Endothelial cell of umbilical vein (primary cell): ENCODE measurements at regions of chr15 and their contacts with region 1.

Region 1: DNA sequence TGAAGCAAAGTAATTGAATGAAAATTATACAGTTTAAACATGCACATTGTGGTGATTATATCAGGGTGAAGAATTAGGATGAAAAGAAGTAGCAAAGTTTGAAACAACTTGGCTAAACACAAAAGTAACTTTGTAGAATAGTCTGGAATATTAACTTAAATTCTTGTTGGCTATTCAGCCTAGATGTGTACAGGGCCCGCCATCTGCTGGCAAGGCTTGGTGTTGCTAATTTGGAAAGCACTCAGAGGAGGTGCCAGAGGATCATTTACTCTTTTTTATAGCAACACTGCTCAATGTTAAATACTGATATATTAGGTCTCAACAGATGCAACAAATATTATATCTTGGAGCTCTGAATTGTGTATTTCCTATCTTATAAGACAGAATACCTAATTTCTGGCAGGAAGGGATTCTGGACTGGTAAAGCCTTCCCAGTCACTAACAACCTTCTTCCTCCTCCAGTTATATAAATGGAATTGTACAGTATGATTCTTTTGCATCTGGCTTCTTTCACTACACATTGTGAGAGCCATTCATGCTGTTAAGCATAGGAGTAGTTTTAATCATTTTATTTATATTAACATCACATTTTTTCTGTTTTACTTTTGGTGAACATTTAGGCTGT is 36.1 kb downstream of the TTC23 start:
- DNase-seq: peak; percentile 77
- H3K4me3 ChIP-seq: no peak overlapping the region
- H3K27ac ChIP-seq: no peak overlapping the region
- H3K4me1 ChIP-seq: peaks cover 11% of the 10 kb centered on the region
- H3K27me3 ChIP-seq: no peaks in the 10 kb centered on the region
- CTCF ChIP-seq: peak; percentile 79 to 83
- POLR2A ChIP-seq: no peak

Region 2: GRCh38 chr15:98658831-98659699 is 554.2 kb before region 1 on chr15:
- CTCF ChIA-PET with region 1: no interaction called
- POLR2A ChIA-PET with region 1: no interaction called
- dilution Hi-C with region 1: no loop called
- intact Hi-C with region 1: loop called (anchors 10 kb)
- DNase-seq: peak; percentile 51
- H3K4me3 ChIP-seq: no peak overlapping the region
- H3K27ac ChIP-seq: no peak overlapping the region
- H3K4me1 ChIP-seq: peaks cover 23% of the 10 kb centered on the region
- H3K27me3 ChIP-seq: no peaks in the 10 kb centered on the region
- CTCF ChIP-seq: peak; percentile 75 to 81
- POLR2A ChIP-seq: no peak

Region 3: GRCh38 chr15:99051308-99051707 is 162.0 kb before region 1 on chr15:
- CTCF ChIA-PET with region 1: no interaction called
- POLR2A ChIA-PET with region 1: no interaction called
- dilution Hi-C with region 1: no loop called
- intact Hi-C with region 1: no loop called
- DNase-seq: no peak
- H3K4me3 ChIP-seq: no peak overlapping the region
- H3K27ac ChIP-seq: no peak overlapping the region
- H3K4me1 ChIP-seq: no peaks in the 10 kb centered on the region
- H3K27me3 ChIP-seq: no peaks in the 10 kb centered on the region
- CTCF ChIP-seq: no peak
- POLR2A ChIP-seq: no peak

Region 4: GRCh38 chr15:99167640-99168039 is 45.7 kb before region 1 on chr15:
- CTCF ChIA-PET with region 1: no interaction called
- POLR2A ChIA-PET with region 1: no interaction called
- dilution Hi-C with region 1: no loop called
- intact Hi-C with region 1: loop called (anchors 2 kb)
- DNase-seq: no peak
- H3K4me3 ChIP-seq: no peak overlapping the region
- H3K27ac ChIP-seq: no peak overlapping the region
- H3K4me1 ChIP-seq: peaks cover 13% of the 10 kb centered on the region
- H3K27me3 ChIP-seq: no peaks in the 10 kb centered on the region
- CTCF ChIP-seq: no peak
- POLR2A ChIP-seq: no peak